GM10248 (cell line): ENCODE measurements at regions of chr2 and their contacts with region 1.

Region 1: GRCh38 chr2:121605820-121606733 is 43.2 kb downstream of the CLASP1 start:
- DNase-seq: no peak
- CTCF ChIP-seq: no peak

Region 2: GRCh38 chr2:121617042-121617599 is 11.0 kb after region 1 on chr2:
- CTCF ChIA-PET with region 1: interaction called, 11 read pairs
- POLR2A ChIA-PET with region 1: no interaction called
- DNase-seq: no peak
- CTCF ChIP-seq: no peak